ENCODE measurements at regions of chr11 and their contacts with region 1.

Region 1: DNA sequence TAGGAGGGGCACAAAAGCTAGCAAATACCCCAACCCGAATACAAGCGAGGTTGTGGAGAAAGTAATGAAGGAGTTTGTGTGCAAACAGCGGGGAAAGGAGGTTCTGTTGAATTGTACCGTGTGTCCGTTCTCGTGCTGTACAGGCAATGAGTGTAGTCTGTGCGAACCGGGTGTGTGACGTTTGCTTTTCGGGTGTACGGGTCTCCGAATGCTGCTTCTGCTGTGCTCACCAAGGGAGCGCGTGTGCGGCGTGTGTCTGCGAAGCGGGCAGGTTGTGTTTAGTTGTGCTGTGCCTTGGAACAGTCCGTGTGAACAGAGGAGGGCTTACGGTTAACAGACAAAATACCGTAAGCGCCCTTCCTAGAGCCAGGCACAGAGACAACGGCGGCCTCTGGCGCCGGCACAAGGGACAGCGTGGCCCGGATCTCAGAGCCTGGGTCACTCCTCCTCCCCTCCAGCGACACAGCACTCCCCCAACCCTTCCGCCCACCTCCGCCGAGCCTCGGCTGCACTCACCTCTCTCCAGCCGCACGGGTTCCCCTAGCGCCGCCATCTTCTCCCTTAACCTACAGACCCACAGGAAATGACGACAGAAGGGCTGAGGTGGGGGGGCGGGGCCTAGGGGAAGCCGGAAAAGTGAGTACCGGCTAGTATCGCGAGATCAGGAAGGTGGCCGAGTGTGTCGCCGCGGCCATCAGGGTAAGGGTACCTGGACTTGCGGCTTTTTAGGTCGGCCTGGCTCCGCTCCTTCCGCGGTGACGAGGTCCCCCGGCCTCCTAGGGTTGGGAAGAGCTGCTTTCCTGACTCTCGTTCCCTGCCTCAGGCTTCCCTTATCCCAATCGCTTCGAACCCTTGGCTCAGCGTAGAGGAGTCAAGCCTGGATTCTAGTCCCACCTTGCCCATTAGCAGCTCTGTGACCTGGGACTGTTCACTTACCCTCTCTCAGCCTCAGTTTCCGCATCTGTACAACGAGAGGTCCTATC is at the start of gene LIN7C:
- DNase-seq: peak; percentile 91 to 98 (median 95)
- ATAC-seq: peak; percentile 89
- H3K4me3 ChIP-seq: peak within 1 kb of the TSS; percentile 71 to 88
- H3K4me3 Mint-ChIP-seq: peak within 1 kb of the TSS; percentile 99
- H3K27ac ChIP-seq: peak within 1 kb of the TSS; percentile 83 to 95
- H3K27ac Mint-ChIP-seq: peak within 1 kb of the TSS; percentile 99
- H3K4me1 ChIP-seq: peaks cover 29% of the 10 kb centered on the region
- H3K4me1 Mint-ChIP-seq: peaks cover 52% of the 10 kb centered on the region
- H3K27me3 ChIP-seq: no peaks in the 10 kb centered on the region
- H3K27me3 Mint-ChIP-seq: no peaks in the 10 kb centered on the region
- CTCF ChIP-seq: peak; percentile 20
- total RNA-seq, gene LIN7C: 24.0 to 26.0 TPM

Region 2: GRCh38 chr11:26964339-26964738 is 542.2 kb before region 1 on chr11:
- CTCF ChIA-PET with region 1: no interaction called
- POLR2A ChIA-PET with region 1: no interaction called
- intact Hi-C with region 1: no loop called
- DNase-seq: no peak
- ATAC-seq: no peak
- H3K4me3 ChIP-seq: no peak overlapping the region
- H3K4me3 Mint-ChIP-seq: no peak overlapping the region
- H3K27ac ChIP-seq: no peak overlapping the region
- H3K27ac Mint-ChIP-seq: no peak overlapping the region
- H3K4me1 ChIP-seq: no peaks in the 10 kb centered on the region
- H3K4me1 Mint-ChIP-seq: no peaks in the 10 kb centered on the region
- H3K27me3 ChIP-seq: no peaks in the 10 kb centered on the region
- H3K27me3 Mint-ChIP-seq: no peaks in the 10 kb centered on the region
- CTCF ChIP-seq: no peak

Region 3: GRCh38 chr11:27362749-27363575 is 143.5 kb before region 1 on chr11 and contains the start of gene CCDC34:
- CTCF ChIA-PET with region 1: no interaction called
- POLR2A ChIA-PET with region 1: no interaction called
- intact Hi-C with region 1: loop called (anchors 1 kb)
- DNase-seq: peak; percentile 72 to 96 (median 87)
- ATAC-seq: peak; percentile 98
- H3K4me3 ChIP-seq: peak within 1 kb of the TSS; percentile 84 to 97
- H3K4me3 Mint-ChIP-seq: peak within 1 kb of the TSS; percentile 93
- H3K27ac ChIP-seq: peak within 1 kb of the TSS; percentile 36 to 46
- H3K27ac Mint-ChIP-seq: peak within 1 kb of the TSS; percentile 89
- H3K4me1 ChIP-seq: peaks cover 12% of the 10 kb centered on the region
- H3K4me1 Mint-ChIP-seq: peaks cover 32% of the 10 kb centered on the region
- H3K27me3 ChIP-seq: no peaks in the 10 kb centered on the region
- H3K27me3 Mint-ChIP-seq: no peaks in the 10 kb centered on the region
- CTCF ChIP-seq: no peak
- total RNA-seq, gene CCDC34: 0.89 to 1.1 TPM

Region 4: GRCh38 chr11:27472398-27473016 is 34.0 kb before region 1 on chr11 and contains the start of gene LGR4:
- CTCF ChIA-PET with region 1: no interaction called
- POLR2A ChIA-PET with region 1: no interaction called
- intact Hi-C with region 1: loop called in 1 of 2 experiments (anchors 1 kb)
- DNase-seq: peak; percentile 39 to 81 (median 70)
- ATAC-seq: peak; percentile 91
- H3K4me3 ChIP-seq: peak within 1 kb of the TSS; percentile 62 to 72
- H3K4me3 Mint-ChIP-seq: peak within 1 kb of the TSS; percentile 92
- H3K27ac ChIP-seq: no peak within 1 kb of the TSS
- H3K27ac Mint-ChIP-seq: no peak within 1 kb of the TSS
- H3K4me1 ChIP-seq: peaks cover 8% of the 10 kb centered on the region
- H3K4me1 Mint-ChIP-seq: peaks cover 15% of the 10 kb centered on the region
- H3K27me3 ChIP-seq: no peaks in the 10 kb centered on the region
- H3K27me3 Mint-ChIP-seq: peaks cover 31% of the 10 kb centered on the region
- CTCF ChIP-seq: no peak
- total RNA-seq, gene LGR4: 0.22 to 0.90 TPM

Region 5: GRCh38 chr11:27540051-27540450 is 33.6 kb after region 1 on chr11:
- CTCF ChIA-PET with region 1: no interaction called
- POLR2A ChIA-PET with region 1: no interaction called
- intact Hi-C with region 1: no loop called
- DNase-seq: no peak
- ATAC-seq: no peak
- H3K4me3 ChIP-seq: no peak overlapping the region
- H3K4me3 Mint-ChIP-seq: no peak overlapping the region
- H3K27ac ChIP-seq: no peak overlapping the region
- H3K27ac Mint-ChIP-seq: no peak overlapping the region
- H3K4me1 ChIP-seq: no peaks in the 10 kb centered on the region
- H3K4me1 Mint-ChIP-seq: no peaks in the 10 kb centered on the region
- H3K27me3 ChIP-seq: no peaks in the 10 kb centered on the region
- H3K27me3 Mint-ChIP-seq: no peaks in the 10 kb centered on the region
- CTCF ChIP-seq: no peak

Region 6: GRCh38 chr11:27646051-27646818 is 139.7 kb after region 1 on chr11:
- CTCF ChIA-PET with region 1: no interaction called
- POLR2A ChIA-PET with region 1: no interaction called
- intact Hi-C with region 1: no loop called
- DNase-seq: no peak
- ATAC-seq: no peak
- H3K4me3 ChIP-seq: no peak overlapping the region
- H3K4me3 Mint-ChIP-seq: no peak overlapping the region
- H3K27ac ChIP-seq: no peak overlapping the region
- H3K27ac Mint-ChIP-seq: no peak overlapping the region
- H3K4me1 ChIP-seq: no peaks in the 10 kb centered on the region
- H3K4me1 Mint-ChIP-seq: no peaks in the 10 kb centered on the region
- H3K27me3 ChIP-seq: no peaks in the 10 kb centered on the region
- H3K27me3 Mint-ChIP-seq: no peaks in the 10 kb centered on the region
- CTCF ChIP-seq: no peak

Region 7: DNA sequence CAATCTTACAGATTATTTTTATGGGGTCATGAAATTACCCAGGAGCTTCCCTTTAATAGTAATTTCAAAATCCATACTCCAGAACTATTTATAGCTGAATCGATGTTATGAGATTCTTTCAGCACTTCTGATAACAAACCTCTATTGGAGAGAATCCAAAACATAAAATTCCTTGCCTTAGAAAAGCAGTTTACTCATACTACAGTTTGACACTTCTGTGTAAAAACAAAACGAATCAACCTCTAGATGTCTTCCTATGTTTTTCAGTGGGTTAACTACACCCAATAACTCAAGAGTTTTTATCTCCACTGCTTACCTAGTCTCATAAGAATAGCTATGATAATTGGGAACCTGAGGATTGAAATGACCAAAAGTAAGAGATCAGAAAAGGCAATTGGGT is 565.8 kb after region 1 on chr11:
- CTCF ChIA-PET with region 1: no interaction called
- POLR2A ChIA-PET with region 1: no interaction called
- intact Hi-C with region 1: no loop called
- DNase-seq: no peak
- ATAC-seq: no peak
- H3K4me3 ChIP-seq: no peak overlapping the region
- H3K4me3 Mint-ChIP-seq: no peak overlapping the region
- H3K27ac ChIP-seq: no peak overlapping the region
- H3K27ac Mint-ChIP-seq: no peak overlapping the region
- H3K4me1 ChIP-seq: no peaks in the 10 kb centered on the region
- H3K4me1 Mint-ChIP-seq: no peaks in the 10 kb centered on the region
- H3K27me3 ChIP-seq: no peaks in the 10 kb centered on the region
- H3K27me3 Mint-ChIP-seq: no peaks in the 10 kb centered on the region
- CTCF ChIP-seq: no peak

Region 8: DNA sequence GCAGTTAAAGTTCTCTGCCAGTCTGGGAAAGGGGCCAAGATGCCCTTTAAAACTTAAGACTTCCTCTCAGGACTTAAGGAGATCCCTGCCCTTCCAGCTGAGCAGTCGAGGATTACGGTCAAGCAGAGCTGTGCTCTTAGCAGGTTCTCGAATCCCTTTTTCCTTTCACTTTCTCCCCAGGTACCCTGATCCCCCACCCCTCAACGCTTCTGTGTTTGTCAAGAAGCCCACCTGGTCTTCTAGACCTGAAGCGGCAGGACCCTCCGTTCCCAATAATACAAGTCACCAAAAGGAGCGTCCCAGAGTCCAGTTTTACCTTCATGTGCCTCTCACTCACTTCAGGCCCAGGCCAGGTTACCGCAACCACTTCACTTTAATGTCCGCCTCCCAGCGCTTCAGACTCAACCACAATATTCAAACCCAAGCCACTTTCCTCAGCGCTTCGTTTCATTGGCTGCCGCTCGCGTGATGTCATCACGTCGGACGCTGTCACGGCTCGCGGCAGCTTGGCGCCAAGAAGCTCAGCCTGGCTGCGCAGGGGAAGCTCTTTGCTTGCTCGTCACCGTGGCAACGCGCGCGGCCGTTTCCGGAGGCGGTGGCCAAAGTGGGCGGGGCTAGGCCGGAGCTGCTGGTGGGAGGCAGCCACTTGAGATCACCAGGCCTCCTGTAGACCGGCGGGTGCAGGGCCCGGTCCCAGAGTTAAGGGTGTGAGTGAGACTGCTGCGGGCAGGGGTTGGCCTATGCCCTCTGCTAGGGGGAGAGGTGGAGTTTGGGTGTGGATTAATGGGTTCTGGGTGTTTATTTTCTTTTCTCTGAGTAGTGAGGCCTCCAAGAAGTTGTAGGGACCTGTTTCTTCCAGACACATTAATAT is 601.5 kb after region 1 on chr11 and contains the starts of genes KIF18A and METTL15:
- CTCF ChIA-PET with region 1: no interaction called
- POLR2A ChIA-PET with region 1: no interaction called
- intact Hi-C with region 1: loop called in 1 of 2 experiments (anchors 5 kb)
- DNase-seq: peak; percentile 94 to 99 (median 98)
- ATAC-seq: peak; percentile 88
- H3K4me3 ChIP-seq: peak within 1 kb of the TSS; percentile 71 to 73
- H3K4me3 Mint-ChIP-seq: peak within 1 kb of the TSS; percentile 90
- H3K27ac ChIP-seq: peak within 1 kb of the TSS; percentile 87 to 88
- H3K27ac Mint-ChIP-seq: peak within 1 kb of the TSS; percentile 98
- H3K4me1 ChIP-seq: peaks cover 40% of the 10 kb centered on the region
- H3K4me1 Mint-ChIP-seq: peaks cover 55% of the 10 kb centered on the region
- H3K27me3 ChIP-seq: no peaks in the 10 kb centered on the region
- H3K27me3 Mint-ChIP-seq: no peaks in the 10 kb centered on the region
- CTCF ChIP-seq: no peak
- total RNA-seq, gene KIF18A: 1.5 to 2.6 TPM
- total RNA-seq, gene METTL15: 2.8 to 3.7 TPM

Measured in CD8-positive, alpha-beta T cell (primary cell).